Activated CD4-positive, alpha-beta memory T cell treated with anti-CD3 and anti-CD28 coated beads, Interleukin-2, amount 10 ng/mL, durations not matched to agents 7 days and 5 days (primary cell): ENCODE measurements at regions of chr17 and their contacts with region 1.

Region 1: DNA sequence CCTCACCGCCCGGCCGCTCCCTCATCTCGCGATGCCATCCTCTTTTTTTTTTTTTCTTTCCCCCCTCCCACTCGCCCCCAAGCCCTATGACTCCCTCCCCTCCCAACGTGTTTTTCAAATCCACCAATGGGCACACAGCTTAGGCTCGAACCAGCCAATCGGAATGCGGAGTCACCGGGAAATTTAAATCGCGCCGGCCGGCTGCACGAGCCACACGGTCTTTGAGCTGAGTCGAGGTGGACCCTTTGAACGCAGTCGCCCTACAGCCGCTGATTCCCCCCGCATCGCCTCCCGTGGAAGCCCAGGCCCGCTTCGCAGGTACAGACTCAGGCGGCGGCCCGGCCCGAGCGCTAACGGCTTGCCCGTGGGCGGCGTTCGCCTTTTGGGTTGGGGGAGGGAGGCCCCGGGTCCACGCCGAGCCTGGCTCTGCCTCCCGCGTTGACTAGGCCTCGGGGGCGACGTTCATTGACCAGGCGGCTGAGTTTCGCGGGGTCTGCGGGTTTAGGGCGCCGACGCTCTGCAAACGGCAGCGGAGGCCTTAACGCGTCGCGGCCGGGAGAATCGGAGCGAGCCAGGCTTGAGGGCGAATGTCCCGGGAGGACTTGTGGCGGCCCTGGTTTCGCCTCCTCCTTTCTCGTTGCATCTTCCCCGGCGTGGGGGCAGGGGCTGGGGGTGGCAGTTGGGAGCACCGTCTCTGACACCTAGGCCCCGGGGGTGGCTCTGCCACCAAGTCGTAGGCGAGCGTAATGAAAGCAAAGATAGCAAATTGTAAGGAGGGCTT is at the start of gene KPNA2:
- DNase-seq: peak; percentile 94
- H3K4me3 Mint-ChIP-seq: peak within 1 kb of the TSS; percentile 99
- H3K27ac Mint-ChIP-seq: peak within 1 kb of the TSS; percentile 96
- H3K4me1 Mint-ChIP-seq: peaks cover 31% of the 10 kb centered on the region
- H3K27me3 Mint-ChIP-seq: no peaks in the 10 kb centered on the region
- total RNA-seq, gene KPNA2: 227 TPM

Region 2: DNA sequence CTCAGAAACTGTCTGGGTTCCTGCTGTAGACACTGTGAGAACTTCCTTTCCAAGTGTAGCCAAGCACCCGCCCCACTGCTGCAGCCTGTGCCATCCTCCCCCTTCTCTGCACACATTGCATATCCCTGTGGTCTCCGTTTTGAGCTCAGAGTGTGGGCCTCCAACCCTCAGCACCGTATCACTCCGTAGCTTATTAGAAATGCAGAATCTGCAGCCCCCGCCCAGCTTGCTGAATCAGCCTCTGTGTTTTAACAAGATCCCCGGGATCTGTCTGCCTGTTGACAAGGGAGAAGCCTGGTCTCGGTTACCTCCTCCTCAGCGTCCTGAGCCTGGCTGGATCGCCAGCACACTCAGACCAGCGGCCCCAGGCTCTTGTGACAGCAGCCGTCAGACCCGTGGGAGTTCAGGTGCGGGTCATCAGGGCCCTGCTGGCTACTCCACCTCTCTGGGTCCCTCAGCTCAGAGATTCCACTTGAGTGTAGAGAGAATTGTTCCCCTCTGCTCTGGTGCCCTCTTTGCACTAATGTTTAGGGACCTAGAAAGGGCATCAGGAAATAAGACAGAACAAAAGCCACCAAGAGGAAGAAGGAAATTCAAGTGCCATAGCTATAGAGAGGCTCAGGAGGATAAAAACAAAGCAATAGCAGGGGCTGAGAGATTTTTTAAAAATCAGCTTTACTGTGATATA is 566.4 kb before region 1 on chr17:
- CTCF ChIA-PET with region 1: no interaction called
- POLR2A ChIA-PET with region 1: no interaction called
- DNase-seq: no peak
- H3K4me3 Mint-ChIP-seq: no peak overlapping the region
- H3K27ac Mint-ChIP-seq: no peak overlapping the region
- H3K4me1 Mint-ChIP-seq: peaks cover 28% of the 10 kb centered on the region
- H3K27me3 Mint-ChIP-seq: peaks cover 2% of the 10 kb centered on the region

Region 3: GRCh38 chr17:67959288-67959900 is 76.3 kb before region 1 on chr17:
- CTCF ChIA-PET with region 1: no interaction called
- POLR2A ChIA-PET with region 1: no interaction called
- DNase-seq: no peak
- H3K4me3 Mint-ChIP-seq: no peak overlapping the region
- H3K27ac Mint-ChIP-seq: no peak overlapping the region
- H3K4me1 Mint-ChIP-seq: peaks cover 9% of the 10 kb centered on the region
- H3K27me3 Mint-ChIP-seq: no peaks in the 10 kb centered on the region

Region 4: GRCh38 chr17:67993596-67994361 is 41.9 kb before region 1 on chr17:
- CTCF ChIA-PET with region 1: no interaction called
- POLR2A ChIA-PET with region 1: interaction called, 19 read pairs
- DNase-seq: no peak
- H3K4me3 Mint-ChIP-seq: peak overlapping the region; percentile 76
- H3K27ac Mint-ChIP-seq: peak overlapping the region; percentile 82
- H3K4me1 Mint-ChIP-seq: peaks cover 37% of the 10 kb centered on the region
- H3K27me3 Mint-ChIP-seq: peaks cover 10% of the 10 kb centered on the region

Region 5: GRCh38 chr17:68019675-68020408 is 15.9 kb before region 1 on chr17:
- CTCF ChIA-PET with region 1: interaction called, 7 read pairs
- POLR2A ChIA-PET with region 1: interaction called, 28 read pairs
- DNase-seq: peak; percentile 98
- H3K4me3 Mint-ChIP-seq: peak overlapping the region; percentile 73
- H3K27ac Mint-ChIP-seq: peak overlapping the region; percentile 81
- H3K4me1 Mint-ChIP-seq: peaks cover 13% of the 10 kb centered on the region
- H3K27me3 Mint-ChIP-seq: peaks cover 5% of the 10 kb centered on the region

Region 6: GRCh38 chr17:68048996-68049395 is 13.3 kb after region 1 on chr17:
- CTCF ChIA-PET with region 1: no interaction called
- POLR2A ChIA-PET with region 1: interaction called, 25 read pairs
- DNase-seq: no peak
- H3K4me3 Mint-ChIP-seq: no peak overlapping the region
- H3K27ac Mint-ChIP-seq: no peak overlapping the region
- H3K4me1 Mint-ChIP-seq: peaks cover 6% of the 10 kb centered on the region
- H3K27me3 Mint-ChIP-seq: no peaks in the 10 kb centered on the region

Region 7: DNA sequence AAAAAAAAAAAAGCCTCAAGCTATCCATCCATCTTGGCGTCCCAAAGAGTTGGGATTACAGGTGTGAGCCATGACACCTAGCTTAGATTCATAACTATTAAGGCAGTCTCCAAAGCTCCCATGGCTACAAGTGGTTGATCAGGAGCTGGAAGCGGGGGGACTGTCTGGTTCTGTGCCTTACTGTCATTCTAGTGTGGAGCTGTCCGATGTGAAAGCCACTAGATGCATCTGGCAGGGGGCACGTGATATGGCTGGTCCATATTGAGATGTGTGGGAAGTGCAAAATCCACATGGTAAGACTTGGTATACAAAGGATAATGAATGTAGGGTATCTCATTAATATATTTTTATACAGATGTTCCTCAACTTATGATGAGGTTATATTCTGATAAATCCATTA is 38.6 kb after region 1 on chr17:
- CTCF ChIA-PET with region 1: no interaction called
- POLR2A ChIA-PET with region 1: no interaction called
- DNase-seq: no peak
- H3K4me3 Mint-ChIP-seq: no peak overlapping the region
- H3K27ac Mint-ChIP-seq: no peak overlapping the region
- H3K4me1 Mint-ChIP-seq: no peaks in the 10 kb centered on the region
- H3K27me3 Mint-ChIP-seq: no peaks in the 10 kb centered on the region